ENCODE measurements at regions of chr5 and their contacts with region 1.

Region 1: GRCh38 chr5:43305948-43306565 is 7.2 kb downstream of the HMGCS1 start:
- DNase-seq: peak; percentile 41
- ATAC-seq: peak; percentile 81
- H3K4me3 ChIP-seq: no peak overlapping the region
- H3K27ac ChIP-seq: no peak overlapping the region
- H3K4me1 ChIP-seq: no peaks in the 10 kb centered on the region
- H3K27me3 ChIP-seq: no peaks in the 10 kb centered on the region
- CTCF ChIP-seq: peak; percentile 57 to 79 (median 70); a peak in 5 of 6 replicates
- POLR2A ChIP-seq: no peak
- RAD21 ChIP-seq: peak; percentile 51

Region 2: GRCh38 chr5:43073597-43074546 is 232.2 kb before region 1 on chr5:
- CTCF ChIA-PET with region 1: interaction called, 10 read pairs
- POLR2A ChIA-PET with region 1: no interaction called
- RAD21 ChIA-PET with region 1: no interaction called
- intact Hi-C with region 1: loop called (anchors 2 kb)
- DNase-seq: peak; percentile 32
- ATAC-seq: peak; percentile 82
- H3K4me3 ChIP-seq: no peak overlapping the region
- H3K27ac ChIP-seq: no peak overlapping the region
- H3K4me1 ChIP-seq: no peaks in the 10 kb centered on the region
- H3K27me3 ChIP-seq: no peaks in the 10 kb centered on the region
- CTCF ChIP-seq: peak; percentile 69 to 74 (median 72)
- POLR2A ChIP-seq: no peak
- RAD21 ChIP-seq: peak; percentile 67

Region 3: GRCh38 chr5:43191740-43192557 is 114.1 kb before region 1 on chr5 and contains the start of gene NIM1K:
- CTCF ChIA-PET with region 1: no interaction called
- POLR2A ChIA-PET with region 1: no interaction called
- RAD21 ChIA-PET with region 1: no interaction called
- intact Hi-C with region 1: no loop called
- DNase-seq: no peak
- ATAC-seq: no peak
- H3K4me3 ChIP-seq: no peak within 1 kb of the TSS
- H3K27ac ChIP-seq: no peak within 1 kb of the TSS
- H3K4me1 ChIP-seq: no peaks in the 10 kb centered on the region
- H3K27me3 ChIP-seq: no peaks in the 10 kb centered on the region
- CTCF ChIP-seq: no peak
- POLR2A ChIP-seq: no peak
- RAD21 ChIP-seq: no peak
- total RNA-seq, gene NIM1K: 0.44 TPM

Region 4: DNA sequence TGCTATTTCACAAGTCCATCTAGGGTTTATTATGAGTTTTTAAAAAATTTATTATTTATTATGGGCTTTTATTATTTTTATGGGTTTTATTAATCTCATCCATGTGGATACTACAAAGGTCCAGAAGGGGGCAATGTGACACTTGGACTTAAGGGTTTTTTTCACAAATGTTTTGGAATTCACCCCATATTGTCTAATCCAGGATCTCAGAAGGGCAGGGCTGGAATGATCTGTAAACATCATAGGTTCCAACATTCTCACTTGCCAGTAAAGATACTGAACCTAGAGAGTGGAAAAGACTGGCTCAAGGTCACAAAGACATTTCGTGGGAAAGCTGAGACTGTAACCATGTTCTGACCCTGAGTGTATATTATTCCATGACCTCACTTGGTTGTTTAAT is 78.4 kb before region 1 on chr5:
- CTCF ChIA-PET with region 1: no interaction called
- POLR2A ChIA-PET with region 1: no interaction called
- RAD21 ChIA-PET with region 1: no interaction called
- intact Hi-C with region 1: loop called (anchors 1 kb)
- DNase-seq: peak; percentile 47
- ATAC-seq: peak; percentile 72
- H3K4me3 ChIP-seq: no peak overlapping the region
- H3K27ac ChIP-seq: no peak overlapping the region
- H3K4me1 ChIP-seq: no peaks in the 10 kb centered on the region
- H3K27me3 ChIP-seq: no peaks in the 10 kb centered on the region
- CTCF ChIP-seq: peak; percentile 42 to 87 (median 59); a peak in 5 of 6 replicates
- POLR2A ChIP-seq: no peak
- RAD21 ChIP-seq: peak; percentile 75

Region 5: GRCh38 chr5:43627028-43627427 is 321.0 kb after region 1 on chr5:
- CTCF ChIA-PET with region 1: no interaction called
- POLR2A ChIA-PET with region 1: no interaction called
- RAD21 ChIA-PET with region 1: no interaction called
- intact Hi-C with region 1: no loop called
- DNase-seq: peak; percentile 66
- ATAC-seq: peak; percentile 91
- H3K4me3 ChIP-seq: no peak overlapping the region
- H3K27ac ChIP-seq: no peak overlapping the region
- H3K4me1 ChIP-seq: peaks cover 0 to 2% of the 10 kb centered on the region in 2 experiments; a peak in 1 of 4 replicates
- H3K27me3 ChIP-seq: no peaks in the 10 kb centered on the region
- CTCF ChIP-seq: peak; percentile 79 to 96 (median 91)
- POLR2A ChIP-seq: no peak
- RAD21 ChIP-seq: peak; percentile 48

Measured in HCT116 (cell line).